Activated CD4-positive, alpha-beta T cell treated with anti-CD3 and anti-CD28 coated beads, Interleukin-2, amount 10 ng/mL, durations not matched to agents 24 days and 14 days (primary cell): ENCODE measurements at regions of chr9 and their contacts with region 1.

Region 1: GRCh38 chr9:88476491-88477271 is 58.3 kb upstream of the NXNL2 start:
- DNase-seq: peak; percentile 58
- H3K4me3 Mint-ChIP-seq: no peak overlapping the region
- H3K27ac Mint-ChIP-seq: peak overlapping the region; percentile 79
- H3K4me1 Mint-ChIP-seq: peaks cover 15% of the 10 kb centered on the region
- H3K27me3 Mint-ChIP-seq: no peaks in the 10 kb centered on the region

Region 2: DNA sequence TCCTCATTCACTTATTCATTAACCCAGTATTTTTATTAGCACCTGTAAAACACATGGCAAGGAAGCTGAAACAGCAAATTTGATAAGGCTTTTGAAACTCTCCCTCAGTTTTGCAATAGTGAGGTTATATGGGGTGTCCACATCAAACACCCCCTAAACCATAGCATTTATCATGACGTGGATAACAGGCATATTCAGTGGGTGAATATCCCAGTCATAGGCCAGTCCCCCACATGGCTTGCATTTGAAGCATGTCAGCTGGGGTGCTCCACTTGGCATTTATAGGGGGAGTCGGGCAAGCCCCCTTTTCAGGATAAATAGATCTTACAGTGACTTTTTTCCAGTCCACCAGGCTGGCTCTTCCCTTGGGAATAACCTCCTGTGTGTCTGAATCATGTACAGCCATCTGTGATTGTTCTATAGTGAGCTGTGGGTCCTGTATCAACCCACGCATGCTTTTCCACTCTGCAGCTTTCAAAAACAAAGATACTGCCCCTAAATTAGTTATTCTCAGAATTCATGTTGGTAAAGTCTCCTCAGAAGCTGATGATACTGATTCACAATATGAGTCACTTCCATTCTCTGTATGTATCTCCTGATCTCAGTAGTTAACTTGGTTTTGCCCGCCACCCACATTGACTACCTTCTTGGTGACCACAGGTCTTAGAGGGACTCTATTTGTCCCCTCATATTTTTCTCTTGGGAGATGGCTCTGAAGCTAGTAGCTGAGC is 172.8 kb before region 1 on chr9:
- intact Hi-C with region 1: loop called (anchors 1 kb)
- DNase-seq: peak; percentile 89
- H3K4me3 Mint-ChIP-seq: peak overlapping the region; percentile 62
- H3K27ac Mint-ChIP-seq: peak overlapping the region; percentile 92
- H3K4me1 Mint-ChIP-seq: peaks cover 53% of the 10 kb centered on the region
- H3K27me3 Mint-ChIP-seq: no peaks in the 10 kb centered on the region

Region 3: GRCh38 chr9:88433583-88434255 is 43.0 kb before region 1 on chr9:
- intact Hi-C with region 1: loop called (anchors 2 kb)
- DNase-seq: peak; percentile 70
- H3K4me3 Mint-ChIP-seq: peak overlapping the region; percentile 56
- H3K27ac Mint-ChIP-seq: peak overlapping the region; percentile 83
- H3K4me1 Mint-ChIP-seq: peaks cover 40% of the 10 kb centered on the region
- H3K27me3 Mint-ChIP-seq: no peaks in the 10 kb centered on the region

Region 4: GRCh38 chr9:88460587-88461332 is 15.9 kb before region 1 on chr9:
- intact Hi-C with region 1: loop called (anchors 2 kb)
- DNase-seq: no peak
- H3K4me3 Mint-ChIP-seq: no peak overlapping the region
- H3K27ac Mint-ChIP-seq: peak overlapping the region; percentile 18
- H3K4me1 Mint-ChIP-seq: peaks cover 15% of the 10 kb centered on the region
- H3K27me3 Mint-ChIP-seq: no peaks in the 10 kb centered on the region

Region 5: GRCh38 chr9:88498880-88499279 is 22.2 kb after region 1 on chr9:
- intact Hi-C with region 1: no loop called
- DNase-seq: no peak
- H3K4me3 Mint-ChIP-seq: no peak overlapping the region
- H3K27ac Mint-ChIP-seq: no peak overlapping the region
- H3K4me1 Mint-ChIP-seq: no peaks in the 10 kb centered on the region
- H3K27me3 Mint-ChIP-seq: peaks cover 2% of the 10 kb centered on the region